Activated CD4-positive, alpha-beta memory T cell treated with anti-CD3 and anti-CD28 coated beads, Interleukin-2, amount 10 ng/mL, durations not matched to agents 7 days and 5 days (primary cell): ENCODE measurements at regions of chr9 and their contacts with region 1.

Region 1: DNA sequence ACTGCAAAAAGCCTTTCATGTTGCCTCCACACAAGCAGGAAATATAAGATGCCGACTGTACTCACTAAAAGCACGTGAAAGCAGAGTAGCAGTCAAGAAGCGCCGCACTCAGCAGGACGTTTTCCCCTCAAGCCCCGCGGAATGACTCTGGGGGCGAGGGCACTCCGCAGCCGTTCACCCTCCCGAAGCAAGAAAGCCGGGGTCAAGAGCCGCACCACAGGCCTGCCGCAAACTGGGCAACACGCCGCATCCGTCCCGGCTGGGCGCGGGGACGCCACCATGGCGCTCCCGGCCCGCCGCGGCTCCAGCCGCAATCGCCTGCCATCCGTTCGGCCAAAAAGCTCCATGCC is 364 bp downstream of the RPS6 start:
- DNase-seq: no peak
- H3K4me3 Mint-ChIP-seq: peak overlapping the region; percentile 91
- H3K27ac Mint-ChIP-seq: peak overlapping the region; percentile 89
- H3K4me1 Mint-ChIP-seq: peaks cover 50% of the 10 kb centered on the region
- H3K27me3 Mint-ChIP-seq: no peaks in the 10 kb centered on the region

Region 2: GRCh38 chr9:19184144-19184917 is 195.3 kb before region 1 on chr9:
- CTCF ChIA-PET with region 1: no interaction called
- POLR2A ChIA-PET with region 1: interaction called, 15 read pairs
- DNase-seq: peak; percentile 88
- H3K4me3 Mint-ChIP-seq: peak overlapping the region; percentile 55
- H3K27ac Mint-ChIP-seq: peak overlapping the region; percentile 99
- H3K4me1 Mint-ChIP-seq: peaks cover 41% of the 10 kb centered on the region
- H3K27me3 Mint-ChIP-seq: no peaks in the 10 kb centered on the region

Region 3: DNA sequence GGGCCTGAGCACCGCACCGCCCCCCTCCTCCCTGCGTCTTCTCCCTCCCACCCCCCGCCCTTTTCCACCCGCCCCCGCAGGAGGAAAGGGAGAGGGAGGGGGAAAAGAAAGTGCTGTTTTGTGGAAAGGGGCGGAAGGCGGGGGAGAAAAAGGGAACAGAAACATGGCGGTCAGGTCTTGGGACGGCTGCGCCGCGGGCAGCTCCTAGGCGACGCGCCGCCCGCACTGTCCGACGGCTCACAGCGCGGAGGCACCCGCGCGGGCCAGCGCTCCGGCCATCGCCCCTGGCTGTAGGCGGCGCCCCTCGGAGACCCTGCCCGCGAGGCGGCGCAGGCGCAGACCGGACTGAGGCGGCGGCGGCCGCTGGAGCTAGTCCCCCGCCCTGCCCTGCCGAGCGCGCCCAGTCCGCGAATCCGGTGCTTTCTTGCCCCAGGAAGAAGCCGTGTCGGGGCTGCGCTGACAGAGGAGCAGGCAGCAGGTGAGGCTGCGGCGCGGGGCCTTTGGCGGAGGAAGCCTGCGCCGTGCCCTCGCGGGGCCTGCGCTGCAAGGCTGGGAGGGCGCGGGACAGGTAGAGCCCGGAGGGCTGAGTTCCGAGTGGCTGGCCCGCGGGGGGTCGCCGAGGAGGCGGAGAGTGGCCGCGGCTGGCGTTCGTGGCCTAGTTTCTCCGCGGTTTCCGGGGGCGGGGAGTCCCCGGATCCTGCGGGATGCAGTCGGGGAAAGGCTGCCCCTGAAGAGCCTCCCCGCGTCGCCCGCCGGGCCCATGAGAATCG is 149.1 kb before region 1 on chr9 and contains the start of gene DENND4C:
- CTCF ChIA-PET with region 1: no interaction called
- POLR2A ChIA-PET with region 1: interaction called, 11 read pairs
- DNase-seq: peak; percentile 86
- H3K4me3 Mint-ChIP-seq: peak within 1 kb of the TSS; percentile 75
- H3K27ac Mint-ChIP-seq: peak within 1 kb of the TSS; percentile 64
- H3K4me1 Mint-ChIP-seq: peaks cover 14% of the 10 kb centered on the region
- H3K27me3 Mint-ChIP-seq: no peaks in the 10 kb centered on the region
- total RNA-seq, gene DENND4C: 47.1 to 52.2 TPM

Region 4: DNA sequence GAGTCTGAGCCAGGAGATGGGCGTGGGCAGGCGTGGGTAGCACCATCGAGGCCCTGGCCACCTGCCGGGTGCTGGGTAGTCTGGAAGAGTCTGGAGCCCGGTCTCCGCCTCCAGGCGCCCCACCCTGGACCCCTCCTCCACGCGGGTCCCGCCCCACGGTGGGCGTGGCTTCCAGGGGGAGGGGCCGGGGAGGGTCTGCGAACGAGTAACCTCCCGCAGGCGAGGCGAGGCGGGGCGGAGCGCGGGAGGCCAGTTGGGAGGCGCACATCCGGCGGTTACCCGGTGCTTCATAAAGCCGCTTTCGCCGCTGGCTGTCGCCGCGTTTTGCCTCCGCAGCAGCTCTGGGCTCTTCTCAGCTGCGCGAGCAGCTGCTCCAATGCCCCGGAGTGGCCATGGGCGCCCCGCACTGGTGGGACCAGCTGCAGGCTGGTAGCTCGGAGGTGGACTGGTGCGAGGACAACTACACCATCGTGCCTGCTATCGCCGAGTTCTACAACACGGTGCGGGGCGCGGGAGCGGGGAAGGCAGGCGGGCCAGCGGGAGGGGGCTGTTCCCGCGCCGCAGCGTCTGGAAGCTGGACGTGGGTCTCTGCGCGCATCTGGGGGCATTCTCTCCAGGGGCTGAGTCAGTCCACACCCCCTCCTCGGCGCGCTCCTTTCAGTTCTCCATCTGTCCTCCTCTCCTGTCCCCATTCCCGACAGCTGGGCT is 29.2 kb after region 1 on chr9 and contains the start of gene ACER2:
- CTCF ChIA-PET with region 1: interaction called, 4 read pairs
- POLR2A ChIA-PET with region 1: interaction called, 16 read pairs
- DNase-seq: peak; percentile 95
- H3K4me3 Mint-ChIP-seq: peak within 1 kb of the TSS; percentile 92
- H3K27ac Mint-ChIP-seq: peak within 1 kb of the TSS; percentile 67
- H3K4me1 Mint-ChIP-seq: peaks cover 16% of the 10 kb centered on the region
- H3K27me3 Mint-ChIP-seq: peaks cover 8% of the 10 kb centered on the region
- total RNA-seq, gene ACER2: 3.2 to 3.3 TPM

Region 5: DNA sequence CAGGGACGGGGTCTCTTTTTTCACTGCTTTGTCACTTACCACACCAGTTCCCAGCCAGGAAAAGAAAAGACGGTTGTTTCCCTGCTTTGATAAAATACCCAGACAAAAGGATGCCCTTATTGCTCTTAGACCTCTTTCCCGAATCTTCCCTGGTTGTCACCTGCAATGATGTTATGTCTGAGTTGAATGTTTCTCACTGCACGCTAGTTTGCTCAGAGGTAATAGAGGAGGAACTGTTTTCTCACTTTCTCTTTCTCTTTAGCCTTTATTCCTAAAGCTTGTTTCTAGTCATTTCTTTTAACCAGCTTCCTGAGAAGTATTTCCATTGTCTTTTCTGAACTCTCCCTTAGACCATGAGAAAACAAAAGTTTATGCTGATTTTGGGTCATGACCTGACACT is 62.1 kb after region 1 on chr9:
- CTCF ChIA-PET with region 1: interaction called, 3 read pairs
- POLR2A ChIA-PET with region 1: interaction called, 15 read pairs
- DNase-seq: no peak
- H3K4me3 Mint-ChIP-seq: peak overlapping the region; percentile 57
- H3K27ac Mint-ChIP-seq: peak overlapping the region; percentile 31
- H3K4me1 Mint-ChIP-seq: peaks cover 20% of the 10 kb centered on the region
- H3K27me3 Mint-ChIP-seq: no peaks in the 10 kb centered on the region

Region 6: GRCh38 chr9:19456996-19457692 is 77.5 kb after region 1 on chr9:
- CTCF ChIA-PET with region 1: interaction called, 4 read pairs
- POLR2A ChIA-PET with region 1: interaction called, 17 read pairs
- DNase-seq: peak; percentile 68
- H3K4me3 Mint-ChIP-seq: peak overlapping the region; percentile 6
- H3K27ac Mint-ChIP-seq: no peak overlapping the region
- H3K4me1 Mint-ChIP-seq: peaks cover 14% of the 10 kb centered on the region
- H3K27me3 Mint-ChIP-seq: no peaks in the 10 kb centered on the region

Region 7: DNA sequence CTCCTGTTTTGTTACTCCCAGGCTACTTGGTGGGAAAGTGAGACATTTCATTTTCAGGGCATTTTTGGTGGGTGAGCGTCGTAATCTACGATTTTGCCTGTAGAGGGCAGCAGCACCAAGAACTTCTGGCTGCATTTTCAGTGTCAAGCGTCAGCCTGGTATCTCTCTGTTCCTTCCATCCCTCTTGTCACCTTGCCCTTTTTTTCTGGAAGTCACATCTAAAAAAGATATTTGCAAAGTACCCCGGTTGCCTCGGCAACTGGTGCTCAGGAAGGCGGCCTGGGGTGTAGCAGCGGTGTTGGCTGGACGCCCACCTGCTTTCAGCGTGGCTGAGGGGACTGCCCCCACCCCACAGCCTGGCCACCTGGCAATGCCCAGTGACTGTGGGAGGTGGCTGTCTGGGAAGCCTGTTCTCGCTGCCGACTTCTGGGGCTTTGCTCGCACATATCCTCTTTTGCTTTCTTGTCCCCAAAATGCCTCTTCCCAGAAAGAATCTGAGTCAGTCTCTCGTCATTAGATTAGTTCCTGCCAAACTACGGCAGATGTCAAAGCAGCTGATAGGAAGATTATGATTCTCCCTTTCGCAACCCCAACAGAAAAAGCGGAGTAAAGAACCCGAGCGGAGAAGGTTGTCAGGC is 113.6 kb after region 1 on chr9:
- CTCF ChIA-PET with region 1: no interaction called
- POLR2A ChIA-PET with region 1: no interaction called
- DNase-seq: peak; percentile 48
- H3K4me3 Mint-ChIP-seq: peak overlapping the region; percentile 8
- H3K27ac Mint-ChIP-seq: no peak overlapping the region
- H3K4me1 Mint-ChIP-seq: peaks cover 10% of the 10 kb centered on the region
- H3K27me3 Mint-ChIP-seq: peaks cover 3% of the 10 kb centered on the region